Activated T-helper 1 cell treated with anti-CD3 and anti-CD28 coated beads, Interleukin-12 subunit alpha, Interleukin-12 subunit beta, Interleukin-2, Interleukin-4 antibody, amounts not matched to agents 30 ng/mL and 10 ng/mL and 1 ng/mL, durations not matched to agents 14 hours and 24 hours and 36 hours (primary cell): ENCODE measurements at regions of chr11 and their contacts with region 1.

Region 1: DNA sequence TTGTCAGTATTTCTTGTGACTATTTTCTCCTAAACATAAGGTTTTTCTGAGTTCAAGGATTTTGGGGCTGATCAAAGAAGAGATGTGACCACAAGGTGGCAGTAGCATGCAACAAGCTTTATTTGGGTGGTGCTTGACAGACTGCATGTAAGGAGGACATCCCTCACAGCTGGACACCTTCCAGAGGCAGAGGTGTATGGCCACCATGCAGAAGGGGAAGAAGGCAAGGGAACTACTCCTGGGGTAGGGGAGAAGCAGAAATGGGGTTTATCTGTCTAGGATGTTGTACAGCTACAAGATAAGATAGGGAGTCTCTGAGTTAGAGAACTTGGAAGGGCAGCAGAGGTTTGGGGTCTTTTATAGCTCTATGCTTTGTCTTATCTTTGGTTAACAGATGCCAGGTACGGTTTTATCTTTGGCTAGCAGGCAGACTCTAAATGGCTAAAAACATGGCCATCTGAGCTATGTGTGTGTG is 5.1 kb upstream of the BIRC2 start:
- DNase-seq: peak; percentile 55
- H3K4me3 Mint-ChIP-seq: no peak overlapping the region
- H3K27ac Mint-ChIP-seq: no peak overlapping the region
- H3K4me1 Mint-ChIP-seq: peaks cover 35% of the 10 kb centered on the region
- H3K27me3 Mint-ChIP-seq: no peaks in the 10 kb centered on the region

Region 2: GRCh38 chr11:102287964-102288724 is 53.7 kb before region 1 on chr11:
- intact Hi-C with region 1: loop called (anchors 1 kb)
- DNase-seq: peak; percentile 24
- H3K4me3 Mint-ChIP-seq: peak overlapping the region; percentile 8
- H3K27ac Mint-ChIP-seq: peak overlapping the region; percentile 35
- H3K4me1 Mint-ChIP-seq: peaks cover 39% of the 10 kb centered on the region
- H3K27me3 Mint-ChIP-seq: no peaks in the 10 kb centered on the region